ENCODE measurements at regions of chr1 and their contacts with region 1.

Region 1: GRCh38 chr1:53860967-53861411 is 22.9 kb upstream of the NDC1 start:
- DNase-seq: peak; percentile 50 to 56
- ATAC-seq: peak; percentile 90 to 94
- H3K4me3 ChIP-seq: no peak overlapping the region
- H3K27ac ChIP-seq: no peak overlapping the region
- H3K4me1 ChIP-seq: no peaks in the 10 kb centered on the region
- CTCF ChIP-seq: peak; percentile 78
- EP300 ChIP-seq: no peak
- POLR2A ChIP-seq: no peak
- RAD21 ChIP-seq: peak; percentile 72 to 81

Region 2: GRCh38 chr1:53061859-53062707 is 798.9 kb before region 1 on chr1 and contains the start of gene PODN:
- CTCF ChIA-PET with region 1: no interaction called
- POLR2A ChIA-PET with region 1: no interaction called
- DNase-seq: no peak
- ATAC-seq: peak in 1 of 2 experiments; percentile 36; a peak in 2 of 6 replicates
- H3K4me3 ChIP-seq: peak within 1 kb of the TSS; percentile 24; the same call in 1 of the 3 replicates
- H3K27ac ChIP-seq: peak within 1 kb of the TSS in 1 of 2 experiments; percentile 65; a peak in 4 of 6 replicates
- H3K4me1 ChIP-seq: no peaks in the 10 kb centered on the region
- CTCF ChIP-seq: no peak
- EP300 ChIP-seq: no peak
- POLR2A ChIP-seq: no peak
- RAD21 ChIP-seq: no peak
- polyA plus RNA-seq, gene PODN: 0.05 and 0.15 TPM in 2 replicates

Region 3: DNA sequence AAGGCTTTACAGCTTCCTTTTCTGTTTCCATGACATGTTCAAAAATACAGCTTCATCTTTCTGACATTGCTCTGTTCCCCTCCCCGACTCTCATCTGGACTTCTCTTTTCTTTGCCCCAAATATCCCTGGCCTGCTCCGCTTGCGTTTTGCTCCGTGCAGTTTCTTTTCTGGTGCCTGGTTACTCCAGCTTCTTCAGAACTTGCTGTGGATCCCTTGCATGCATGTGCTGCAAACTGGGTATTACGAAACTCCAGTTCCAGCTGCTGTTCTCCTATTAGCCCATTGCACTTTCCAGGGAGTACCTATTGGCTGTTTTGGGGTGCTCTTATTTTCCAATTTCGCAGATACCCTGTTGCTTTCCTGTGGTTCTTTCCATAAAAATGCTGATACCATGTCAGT is 13.0 kb before region 1 on chr1:
- CTCF ChIA-PET with region 1: interaction called, 33 read pairs
- POLR2A ChIA-PET with region 1: no interaction called
- DNase-seq: no peak
- ATAC-seq: no peak
- H3K4me3 ChIP-seq: no peak overlapping the region
- H3K27ac ChIP-seq: no peak overlapping the region
- H3K4me1 ChIP-seq: no peaks in the 10 kb centered on the region
- CTCF ChIP-seq: no peak
- EP300 ChIP-seq: no peak
- POLR2A ChIP-seq: no peak
- RAD21 ChIP-seq: no peak

Region 4: GRCh38 chr1:53878492-53879105 is 17.6 kb after region 1 on chr1:
- CTCF ChIA-PET with region 1: interaction called, 46 read pairs
- POLR2A ChIA-PET with region 1: no interaction called
- DNase-seq: peak; percentile 11 to 59
- ATAC-seq: peak in 1 of 2 experiments; percentile 46; a peak in 1 of 6 replicates
- H3K4me3 ChIP-seq: no peak overlapping the region
- H3K27ac ChIP-seq: no peak overlapping the region
- H3K4me1 ChIP-seq: no peaks in the 10 kb centered on the region
- CTCF ChIP-seq: peak; percentile 72
- EP300 ChIP-seq: no peak
- POLR2A ChIP-seq: no peak
- RAD21 ChIP-seq: peak; percentile 55 to 59